ENCODE measurements at regions of chr6 and their contacts with region 1.

Region 1: DNA sequence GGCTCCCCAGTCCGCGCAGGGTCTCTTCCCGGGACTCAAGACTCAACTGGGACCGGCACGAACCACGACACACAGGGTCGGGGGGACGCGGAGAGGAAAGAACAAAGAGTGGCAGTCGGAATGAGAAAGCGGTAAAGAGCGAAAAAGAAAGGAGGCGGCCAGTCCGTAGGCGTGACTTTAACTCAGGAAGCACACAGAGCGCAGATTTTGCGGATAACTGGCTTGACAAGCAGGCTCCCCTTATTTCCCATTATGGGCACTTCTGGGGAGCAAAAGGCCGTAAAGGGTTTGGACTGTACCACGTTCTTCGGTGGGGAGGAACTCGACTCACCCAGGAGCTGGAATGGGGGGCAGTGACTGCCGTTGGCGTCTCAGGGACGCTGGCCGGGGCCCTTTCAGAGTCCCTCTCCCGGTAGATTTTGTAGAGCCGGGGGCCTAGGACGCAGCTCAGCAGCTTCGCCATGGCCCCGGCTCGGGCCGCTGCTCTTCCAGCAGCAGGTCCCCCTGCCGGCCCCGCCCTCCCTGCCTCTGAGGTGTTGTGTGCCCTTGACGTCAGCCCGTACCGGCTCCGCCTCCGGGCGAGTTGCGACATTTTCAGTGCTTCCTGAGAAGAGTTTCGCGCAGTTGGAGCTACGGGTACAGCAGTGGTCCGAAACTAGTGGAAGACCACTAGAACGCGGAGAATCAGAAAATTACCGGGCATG is at the start of gene ABHD16A:
- DNase-seq: peak; percentile 93 to 99 (median 98)
- ATAC-seq: peak; percentile 93
- H3K4me3 ChIP-seq: peak within 1 kb of the TSS; percentile 83 to 98
- H3K4me3 Mint-ChIP-seq: peak within 1 kb of the TSS; percentile 99
- H3K27ac ChIP-seq: peak within 1 kb of the TSS; percentile 91 to 100
- H3K27ac Mint-ChIP-seq: peak within 1 kb of the TSS; percentile 92
- H3K4me1 ChIP-seq: peaks cover 22% of the 10 kb centered on the region
- H3K4me1 Mint-ChIP-seq: peaks cover 36% of the 10 kb centered on the region
- H3K27me3 ChIP-seq: no peaks in the 10 kb centered on the region
- H3K27me3 Mint-ChIP-seq: no peaks in the 10 kb centered on the region
- CTCF ChIP-seq: no peak
- total RNA-seq, gene ABHD16A: 79.6 to 81.6 TPM

Region 2: DNA sequence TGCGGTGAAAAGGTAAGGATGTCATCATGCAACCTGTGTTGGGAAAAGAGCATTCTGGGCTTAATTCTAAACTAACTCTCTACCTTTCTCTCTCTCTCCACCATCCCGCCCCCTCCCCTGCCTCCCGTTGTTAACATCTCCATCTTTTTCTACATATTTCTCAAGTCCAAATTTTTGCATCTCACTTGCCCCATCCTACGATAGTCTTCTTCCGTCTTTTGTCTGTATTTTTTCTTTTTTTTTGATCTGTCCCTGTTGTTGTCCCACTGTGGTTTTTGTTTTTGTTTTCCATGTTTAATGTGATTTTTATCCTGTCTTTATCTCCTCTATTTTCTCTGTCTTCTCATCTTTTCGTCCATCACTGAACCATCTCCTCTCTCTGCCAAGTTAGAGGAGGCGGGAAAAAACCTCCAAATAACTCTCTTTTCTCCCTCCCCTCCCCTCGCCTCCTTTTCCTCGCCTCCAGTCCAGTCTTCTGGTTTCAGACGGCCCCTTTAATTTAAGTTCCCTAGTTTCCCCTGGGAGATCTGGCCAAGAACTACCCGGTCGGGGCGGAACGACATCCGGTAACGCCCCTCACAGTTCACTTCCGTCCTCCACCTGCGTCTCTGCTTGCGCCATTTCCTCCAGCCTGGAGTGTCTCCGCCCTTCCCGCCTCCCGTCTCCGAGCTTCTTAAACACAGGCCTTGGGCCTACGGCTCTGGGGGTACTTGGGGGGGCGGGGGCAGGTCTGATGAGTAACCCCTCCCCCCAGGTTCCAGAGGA is 155.8 kb before region 1 on chr6 and contains the start of gene NFKBIL1:
- CTCF ChIA-PET with region 1: no interaction called
- POLR2A ChIA-PET with region 1: no interaction called
- intact Hi-C with region 1: loop called in 1 of 2 experiments (anchors 1 kb)
- DNase-seq: peak; percentile 78 to 97 (median 89)
- ATAC-seq: peak; percentile 80
- H3K4me3 ChIP-seq: peak within 1 kb of the TSS; percentile 53 to 54
- H3K4me3 Mint-ChIP-seq: peak within 1 kb of the TSS; percentile 79
- H3K27ac ChIP-seq: peak within 1 kb of the TSS; percentile 55 to 89
- H3K27ac Mint-ChIP-seq: peak within 1 kb of the TSS; percentile 90
- H3K4me1 ChIP-seq: peaks cover 31% of the 10 kb centered on the region
- H3K4me1 Mint-ChIP-seq: peaks cover 46% of the 10 kb centered on the region
- H3K27me3 ChIP-seq: no peaks in the 10 kb centered on the region
- H3K27me3 Mint-ChIP-seq: no peaks in the 10 kb centered on the region
- CTCF ChIP-seq: peak; percentile 40
- total RNA-seq, gene NFKBIL1: 6.1 to 7.0 TPM

Region 3: DNA sequence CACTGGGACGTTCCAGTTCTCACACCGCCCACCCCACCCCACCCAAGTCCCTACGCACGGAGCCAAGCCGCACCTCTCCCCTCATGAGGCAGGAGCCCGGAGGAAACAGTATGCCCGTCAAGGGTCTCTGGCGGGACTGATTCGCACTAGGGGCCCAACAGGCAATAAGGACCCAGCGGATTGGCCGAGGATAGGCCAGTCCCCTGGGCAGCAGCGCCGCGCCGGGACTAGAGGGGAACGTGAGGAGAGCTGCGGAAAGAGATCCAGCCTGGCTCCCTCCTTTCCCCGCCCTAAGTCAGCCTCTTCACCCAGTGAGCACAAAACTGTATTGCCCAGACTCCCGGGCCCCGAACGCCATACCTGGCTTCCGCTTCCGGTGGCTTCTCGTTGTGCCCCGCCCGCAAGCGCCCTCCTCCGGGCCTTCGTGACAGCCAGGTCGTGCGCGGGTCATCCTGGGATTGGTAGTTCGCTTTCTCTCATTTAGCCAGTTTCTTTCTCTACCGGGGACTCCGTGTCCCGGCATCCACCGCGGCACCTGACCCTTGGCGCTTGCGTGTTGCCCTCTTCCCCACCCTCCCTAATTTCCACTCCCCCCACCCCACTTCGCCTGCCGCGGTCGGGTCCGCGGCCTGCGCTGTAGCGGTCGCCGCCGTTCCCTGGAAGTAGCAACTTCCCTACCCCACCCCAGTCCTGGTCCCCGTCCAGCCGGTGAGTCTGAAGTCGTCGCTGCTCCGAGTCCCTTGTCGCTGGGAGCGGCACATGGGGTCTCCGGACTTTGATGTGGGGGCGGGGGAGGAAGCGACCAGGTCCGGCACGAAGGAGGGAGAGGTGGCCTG is 37.3 kb before region 1 on chr6 and contains the start of gene CSNK2B:
- CTCF ChIA-PET with region 1: no interaction called
- POLR2A ChIA-PET with region 1: interaction called, 7 read pairs
- intact Hi-C with region 1: loop called (anchors 1 kb)
- DNase-seq: peak; percentile 95 to 99 (median 98)
- ATAC-seq: peak; percentile 84
- H3K4me3 ChIP-seq: peak within 1 kb of the TSS; percentile 91 to 94
- H3K4me3 Mint-ChIP-seq: peak within 1 kb of the TSS; percentile 95
- H3K27ac ChIP-seq: peak within 1 kb of the TSS; percentile 96 to 99
- H3K27ac Mint-ChIP-seq: peak within 1 kb of the TSS; percentile 98
- H3K4me1 ChIP-seq: peaks cover 44% of the 10 kb centered on the region
- H3K4me1 Mint-ChIP-seq: peaks cover 56% of the 10 kb centered on the region
- H3K27me3 ChIP-seq: no peaks in the 10 kb centered on the region
- H3K27me3 Mint-ChIP-seq: no peaks in the 10 kb centered on the region
- CTCF ChIP-seq: no peak
- total RNA-seq, gene CSNK2B: 80.9 to 86.1 TPM

Region 4: GRCh38 chr6:31806465-31807272 is 103.7 kb after region 1 on chr6 and contains the start of gene LSM2:
- CTCF ChIA-PET with region 1: no interaction called
- POLR2A ChIA-PET with region 1: no interaction called
- intact Hi-C with region 1: loop called in 1 of 2 experiments (anchors 1 kb)
- DNase-seq: peak; percentile 92 to 99 (median 97)
- ATAC-seq: peak; percentile 99
- H3K4me3 ChIP-seq: peak within 1 kb of the TSS; percentile 61 to 95
- H3K4me3 Mint-ChIP-seq: peak within 1 kb of the TSS; percentile 87
- H3K27ac ChIP-seq: peak within 1 kb of the TSS; percentile 78 to 82
- H3K27ac Mint-ChIP-seq: peak within 1 kb of the TSS; percentile 94
- H3K4me1 ChIP-seq: peaks cover 8% of the 10 kb centered on the region
- H3K4me1 Mint-ChIP-seq: peaks cover 25% of the 10 kb centered on the region
- H3K27me3 ChIP-seq: no peaks in the 10 kb centered on the region
- H3K27me3 Mint-ChIP-seq: no peaks in the 10 kb centered on the region
- CTCF ChIP-seq: no peak
- total RNA-seq, gene LSM2: 19.6 to 26.4 TPM

Region 5: GRCh38 chr6:31901953-31902643 is 199.1 kb after region 1 on chr6 and contains the start of gene ZBTB12:
- CTCF ChIA-PET with region 1: no interaction called
- POLR2A ChIA-PET with region 1: interaction called, 3 read pairs
- intact Hi-C with region 1: loop called (anchors 1 kb)
- DNase-seq: peak; percentile 68 to 94 (median 84)
- ATAC-seq: peak; percentile 54
- H3K4me3 ChIP-seq: peak within 1 kb of the TSS; percentile 70 to 97
- H3K4me3 Mint-ChIP-seq: peak within 1 kb of the TSS; percentile 89
- H3K27ac ChIP-seq: peak within 1 kb of the TSS; percentile 47 to 76
- H3K27ac Mint-ChIP-seq: peak within 1 kb of the TSS; percentile 77
- H3K4me1 ChIP-seq: peaks cover 30% of the 10 kb centered on the region
- H3K4me1 Mint-ChIP-seq: peaks cover 32% of the 10 kb centered on the region
- H3K27me3 ChIP-seq: no peaks in the 10 kb centered on the region
- H3K27me3 Mint-ChIP-seq: no peaks in the 10 kb centered on the region
- CTCF ChIP-seq: no peak
- total RNA-seq, gene ZBTB12: 0.27 TPM in 1 of 2 experiments, not detected in the other

Region 6: GRCh38 chr6:32177788-32178546 is 475.0 kb after region 1 on chr6 and contains the start of gene RNF5:
- CTCF ChIA-PET with region 1: no interaction called
- POLR2A ChIA-PET with region 1: no interaction called
- intact Hi-C with region 1: loop called in 1 of 2 experiments (anchors 5 kb)
- DNase-seq: peak; percentile 84 to 100 (median 93)
- ATAC-seq: peak; percentile 83
- H3K4me3 ChIP-seq: peak within 1 kb of the TSS; percentile 72 to 82
- H3K4me3 Mint-ChIP-seq: peak within 1 kb of the TSS; percentile 93
- H3K27ac ChIP-seq: peak within 1 kb of the TSS; percentile 89 to 98
- H3K27ac Mint-ChIP-seq: peak within 1 kb of the TSS; percentile 96
- H3K4me1 ChIP-seq: peaks cover 59% of the 10 kb centered on the region
- H3K4me1 Mint-ChIP-seq: peaks cover 69% of the 10 kb centered on the region
- H3K27me3 ChIP-seq: no peaks in the 10 kb centered on the region
- H3K27me3 Mint-ChIP-seq: no peaks in the 10 kb centered on the region
- CTCF ChIP-seq: no peak
- total RNA-seq, gene RNF5: 10.0 to 11.5 TPM

Measured in CD8-positive, alpha-beta T cell (primary cell).